Gastrocnemius medialis (tissue), 4 donors: ENCODE measurements at regions of chr9 and their contacts with region 1.

Region 1: GRCh38 chr9:12185856-12186255 is 507.3 kb upstream of the TYRP1 start:
- DNase-seq: no peak
- ATAC-seq: no peak
- H3K4me3 ChIP-seq: no peak overlapping the region
- H3K27ac ChIP-seq: no peak overlapping the region
- H3K4me1 ChIP-seq: no peaks in the 10 kb centered on the region
- H3K27me3 ChIP-seq: no peaks in the 10 kb centered on the region
- CTCF ChIP-seq: no peak
- POLR2A ChIP-seq: no peak

Region 2: DNA sequence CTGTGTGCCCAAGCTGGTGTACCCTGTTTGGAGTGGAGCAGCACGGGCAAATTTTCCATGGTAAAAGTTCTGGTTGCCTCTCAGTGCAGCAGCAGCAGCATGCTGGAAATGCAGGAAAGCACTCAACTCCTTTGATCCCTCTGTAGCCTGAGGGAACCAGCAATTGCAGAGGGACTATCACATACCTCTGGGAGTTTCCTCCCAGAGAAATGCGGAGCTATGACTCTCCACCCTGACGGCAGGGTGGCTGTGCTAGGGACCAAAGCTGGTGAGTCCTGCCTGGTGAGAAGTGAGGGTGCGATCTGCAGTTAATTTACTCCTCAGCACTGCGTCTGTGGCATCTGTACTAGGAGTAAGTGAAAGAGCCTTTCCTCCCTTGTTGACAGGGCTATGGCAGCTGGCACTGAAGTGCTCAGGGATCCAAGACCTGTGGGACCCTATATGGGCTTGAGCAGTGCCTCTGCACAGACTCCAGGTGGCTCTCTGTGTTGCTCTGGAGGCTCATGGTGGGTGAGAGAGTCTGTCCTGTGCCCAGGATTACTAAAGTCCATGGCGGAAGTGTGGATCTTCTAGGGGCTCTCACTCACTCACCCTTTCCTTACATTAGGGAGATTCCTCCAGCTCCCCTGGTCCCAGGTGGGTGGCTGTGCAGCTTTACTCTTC is 93.9 kb before region 1 on chr9:
- in situ Hi-C with region 1: loop called in 1 of 4 experiments (anchors 25 kb)
- intact Hi-C with region 1: no loop called
- DNase-seq: no peak
- ATAC-seq: no peak
- H3K4me3 ChIP-seq: no peak overlapping the region
- H3K27ac ChIP-seq: no peak overlapping the region
- H3K4me1 ChIP-seq: no peaks in the 10 kb centered on the region
- H3K27me3 ChIP-seq: no peaks in the 10 kb centered on the region
- CTCF ChIP-seq: no peak
- POLR2A ChIP-seq: no peak